CD4-positive, alpha-beta T cell (primary cell): ENCODE measurements at regions of chr11 and their contacts with region 1.

Region 1: GRCh38 chr11:33039274-33040032 is at the start of gene TCP11L1:
- DNase-seq: peak; percentile 66 to 91 (median 78)
- ATAC-seq: peak; percentile 85
- H3K4me3 ChIP-seq: peak within 1 kb of the TSS; percentile 99
- H3K4me3 Mint-ChIP-seq: peak within 1 kb of the TSS; percentile 98
- H3K27ac ChIP-seq: peak within 1 kb of the TSS; percentile 62 to 90
- H3K27ac Mint-ChIP-seq: peak within 1 kb of the TSS; percentile 95
- H3K4me1 ChIP-seq: peaks cover 17% of the 10 kb centered on the region
- H3K4me1 Mint-ChIP-seq: peaks cover 17% of the 10 kb centered on the region
- H3K27me3 ChIP-seq: no peaks in the 10 kb centered on the region
- H3K27me3 Mint-ChIP-seq: peaks cover 5% of the 10 kb centered on the region
- CTCF ChIP-seq: no peak
- total RNA-seq, gene TCP11L1: 9.8 to 11.9 TPM

Region 2: DNA sequence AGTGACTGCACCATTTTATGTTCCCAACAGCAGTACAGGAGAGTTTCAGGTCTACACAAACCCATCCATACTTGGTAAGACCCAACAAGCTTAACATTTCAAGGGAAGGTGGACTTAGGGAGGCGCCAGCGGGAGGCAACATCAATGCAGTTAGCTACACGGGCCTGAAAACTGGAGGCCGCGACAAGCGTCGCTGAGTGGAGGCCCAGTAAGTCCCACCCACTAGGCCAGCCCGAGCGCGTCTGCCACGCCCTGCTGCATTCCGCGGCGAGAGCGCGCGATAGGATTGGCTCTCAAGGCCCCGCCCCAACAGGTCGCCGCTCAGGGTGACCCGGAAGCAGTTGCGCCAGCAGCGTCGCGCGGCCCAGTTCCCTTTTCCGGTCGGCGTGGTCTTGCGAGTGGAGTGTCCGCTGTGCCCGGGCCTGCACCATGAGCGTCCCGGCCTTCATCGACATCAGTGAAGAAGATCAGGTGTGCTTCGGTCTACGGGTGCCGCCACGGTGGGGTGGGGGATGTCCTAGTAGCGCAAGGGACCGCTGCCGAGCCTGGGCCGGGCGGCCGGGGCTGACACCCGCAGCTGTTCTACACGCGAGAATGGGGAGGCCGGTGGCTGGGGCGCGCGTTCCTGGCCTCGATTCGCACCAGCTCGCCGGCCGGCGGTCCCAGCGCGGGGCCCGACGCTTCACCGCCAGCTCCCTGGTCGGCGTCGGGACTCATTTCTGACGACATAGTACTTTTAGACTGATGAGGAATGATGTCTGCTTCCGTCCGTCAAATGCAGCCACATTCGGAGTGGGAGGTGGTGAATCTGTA is 455.8 kb before region 1 on chr11 and contains the start of gene EIF3M:
- CTCF ChIA-PET with region 1: no interaction called
- POLR2A ChIA-PET with region 1: no interaction called
- intact Hi-C with region 1: loop called in 1 of 2 experiments (anchors 10 kb)
- DNase-seq: peak; percentile 92 to 98 (median 95)
- ATAC-seq: peak; percentile 98
- H3K4me3 ChIP-seq: peak within 1 kb of the TSS; percentile 89
- H3K4me3 Mint-ChIP-seq: peak within 1 kb of the TSS; percentile 94
- H3K27ac ChIP-seq: peak within 1 kb of the TSS; percentile 84 to 87
- H3K27ac Mint-ChIP-seq: peak within 1 kb of the TSS; percentile 94
- H3K4me1 ChIP-seq: peaks cover 38% of the 10 kb centered on the region
- H3K4me1 Mint-ChIP-seq: peaks cover 52% of the 10 kb centered on the region
- H3K27me3 ChIP-seq: no peaks in the 10 kb centered on the region
- H3K27me3 Mint-ChIP-seq: no peaks in the 10 kb centered on the region
- CTCF ChIP-seq: no peak
- total RNA-seq, gene EIF3M: 260 to 264 TPM

Region 3: GRCh38 chr11:33015621-33016551 is 23.6 kb before region 1 on chr11 and contains the start of gene DEPDC7:
- CTCF ChIA-PET with region 1: no interaction called
- POLR2A ChIA-PET with region 1: interaction called, 34 read pairs
- intact Hi-C with region 1: loop called (anchors 1 to 2 kb)
- DNase-seq: peak; percentile 57 to 89 (median 74)
- ATAC-seq: peak; percentile 76
- H3K4me3 ChIP-seq: peak within 1 kb of the TSS; percentile 57
- H3K4me3 Mint-ChIP-seq: peak within 1 kb of the TSS; percentile 96
- H3K27ac ChIP-seq: no peak within 1 kb of the TSS
- H3K27ac Mint-ChIP-seq: peak within 1 kb of the TSS; percentile 73
- H3K4me1 ChIP-seq: peaks cover 30% of the 10 kb centered on the region
- H3K4me1 Mint-ChIP-seq: peaks cover 55% of the 10 kb centered on the region
- H3K27me3 ChIP-seq: peaks cover 12 to 15% of the 10 kb centered on the region in 2 experiments
- H3K27me3 Mint-ChIP-seq: peaks cover 10% of the 10 kb centered on the region
- CTCF ChIP-seq: no peak
- total RNA-seq, gene DEPDC7: 2.9 to 3.1 TPM

Region 4: GRCh38 chr11:33021937-33022336 is 17.5 kb before region 1 on chr11:
- CTCF ChIA-PET with region 1: interaction called, 3 read pairs
- POLR2A ChIA-PET with region 1: interaction called, 34 read pairs
- intact Hi-C with region 1: loop called in 1 of 2 experiments (anchors 2 kb)
- DNase-seq: no peak
- ATAC-seq: peak; percentile 67
- H3K4me3 ChIP-seq: no peak overlapping the region
- H3K4me3 Mint-ChIP-seq: no peak overlapping the region
- H3K27ac ChIP-seq: no peak overlapping the region
- H3K27ac Mint-ChIP-seq: peak overlapping the region; percentile 1
- H3K4me1 ChIP-seq: no peaks in the 10 kb centered on the region
- H3K4me1 Mint-ChIP-seq: peaks cover 27% of the 10 kb centered on the region
- H3K27me3 ChIP-seq: peaks cover 3 to 9% of the 10 kb centered on the region in 2 experiments
- H3K27me3 Mint-ChIP-seq: peaks cover 5% of the 10 kb centered on the region
- CTCF ChIP-seq: no peak

Region 5: GRCh38 chr11:34916015-34916842 is 1876.8 kb after region 1 on chr11 and contains the starts of genes APIP and PDHX:
- CTCF ChIA-PET with region 1: no interaction called
- POLR2A ChIA-PET with region 1: no interaction called
- intact Hi-C with region 1: loop called in 1 of 2 experiments (anchors 10 kb)
- DNase-seq: peak; percentile 91 to 99 (median 95)
- ATAC-seq: peak; percentile 90
- H3K4me3 ChIP-seq: peak within 1 kb of the TSS; percentile 94
- H3K4me3 Mint-ChIP-seq: peak within 1 kb of the TSS; percentile 96
- H3K27ac ChIP-seq: peak within 1 kb of the TSS; percentile 80 to 93
- H3K27ac Mint-ChIP-seq: peak within 1 kb of the TSS; percentile 93
- H3K4me1 ChIP-seq: peaks cover 24% of the 10 kb centered on the region
- H3K4me1 Mint-ChIP-seq: peaks cover 57% of the 10 kb centered on the region
- H3K27me3 ChIP-seq: no peaks in the 10 kb centered on the region
- H3K27me3 Mint-ChIP-seq: no peaks in the 10 kb centered on the region
- CTCF ChIP-seq: no peak
- total RNA-seq, gene APIP: 7.1 to 8.3 TPM
- total RNA-seq, gene PDHX: 17.3 to 17.4 TPM